ENCODE measurements at regions of chr20 and their contacts with region 1.

Region 1: GRCh38 chr20:34129518-34130162 is 17.6 kb upstream of the EIF2S2 start:
- DNase-seq: peak; percentile 64
- ATAC-seq: peak; percentile 91

Region 2: DNA sequence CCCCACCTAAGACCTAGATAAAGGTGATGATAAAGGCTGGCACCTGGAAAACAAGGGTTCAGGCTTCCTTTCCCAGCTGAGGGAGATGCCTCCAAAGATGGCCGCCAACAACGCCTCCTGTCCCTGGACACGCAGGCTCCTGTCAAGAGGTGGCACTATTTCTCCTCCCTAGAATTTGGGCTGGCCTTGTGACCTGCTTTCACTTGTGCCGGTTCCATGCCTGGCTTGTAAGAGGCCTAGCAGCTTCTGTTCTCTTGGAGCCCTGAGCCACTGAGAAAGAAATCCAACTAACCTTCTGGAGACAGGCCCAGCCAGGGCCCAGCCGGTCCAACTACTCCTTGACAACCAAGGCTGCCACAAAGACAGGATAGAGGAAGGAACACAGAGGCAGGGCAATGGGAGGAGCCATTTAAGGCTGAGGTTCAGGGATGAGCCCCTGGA is 196.2 kb before region 1 on chr20:
- intact Hi-C with region 1: loop called (anchors 10 kb)
- DNase-seq: peak; percentile 70
- ATAC-seq: peak; percentile 96